ENCODE measurements at regions of chr1 and their contacts with region 1.

Region 1: DNA sequence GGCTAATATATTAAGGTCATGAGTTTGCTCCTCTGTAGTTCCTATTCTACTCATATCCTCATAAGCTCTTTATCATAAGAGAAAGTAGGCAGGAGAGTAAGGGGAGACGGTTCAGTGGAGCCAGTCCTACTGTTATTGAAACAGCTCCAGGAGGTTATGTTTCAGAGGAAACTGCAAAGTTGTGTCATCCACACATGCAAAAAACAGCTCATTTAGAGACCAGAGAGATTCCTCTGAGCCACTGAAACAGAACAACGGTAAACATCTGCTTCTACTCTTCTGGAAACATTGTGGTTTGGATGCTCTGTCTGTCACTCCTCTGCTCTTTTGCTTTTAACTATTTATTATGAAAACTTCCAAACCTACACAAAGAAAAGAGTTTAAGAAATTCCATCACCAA is 66.3 kb upstream of the PPP2R5A start:
- DNase-seq: peak; percentile 70
- H3K4me3 Mint-ChIP-seq: peak overlapping the region; percentile 34
- H3K27ac Mint-ChIP-seq: peak overlapping the region; percentile 81
- H3K4me1 Mint-ChIP-seq: peaks cover 27% of the 10 kb centered on the region
- H3K27me3 Mint-ChIP-seq: no peaks in the 10 kb centered on the region

Region 2: GRCh38 chr1:212179394-212180076 is 39.4 kb before region 1 on chr1:
- intact Hi-C with region 1: loop called (anchors 5 kb)
- DNase-seq: no peak
- H3K4me3 Mint-ChIP-seq: no peak overlapping the region
- H3K27ac Mint-ChIP-seq: no peak overlapping the region
- H3K4me1 Mint-ChIP-seq: peaks cover 6% of the 10 kb centered on the region
- H3K27me3 Mint-ChIP-seq: no peaks in the 10 kb centered on the region

Region 3: GRCh38 chr1:212234431-212235395 is 15.8 kb after region 1 on chr1:
- intact Hi-C with region 1: loop called (anchors 1 kb)
- DNase-seq: peak; percentile 74
- H3K4me3 Mint-ChIP-seq: peak overlapping the region; percentile 46
- H3K27ac Mint-ChIP-seq: peak overlapping the region; percentile 80
- H3K4me1 Mint-ChIP-seq: peaks cover 51% of the 10 kb centered on the region
- H3K27me3 Mint-ChIP-seq: no peaks in the 10 kb centered on the region

Region 4: DNA sequence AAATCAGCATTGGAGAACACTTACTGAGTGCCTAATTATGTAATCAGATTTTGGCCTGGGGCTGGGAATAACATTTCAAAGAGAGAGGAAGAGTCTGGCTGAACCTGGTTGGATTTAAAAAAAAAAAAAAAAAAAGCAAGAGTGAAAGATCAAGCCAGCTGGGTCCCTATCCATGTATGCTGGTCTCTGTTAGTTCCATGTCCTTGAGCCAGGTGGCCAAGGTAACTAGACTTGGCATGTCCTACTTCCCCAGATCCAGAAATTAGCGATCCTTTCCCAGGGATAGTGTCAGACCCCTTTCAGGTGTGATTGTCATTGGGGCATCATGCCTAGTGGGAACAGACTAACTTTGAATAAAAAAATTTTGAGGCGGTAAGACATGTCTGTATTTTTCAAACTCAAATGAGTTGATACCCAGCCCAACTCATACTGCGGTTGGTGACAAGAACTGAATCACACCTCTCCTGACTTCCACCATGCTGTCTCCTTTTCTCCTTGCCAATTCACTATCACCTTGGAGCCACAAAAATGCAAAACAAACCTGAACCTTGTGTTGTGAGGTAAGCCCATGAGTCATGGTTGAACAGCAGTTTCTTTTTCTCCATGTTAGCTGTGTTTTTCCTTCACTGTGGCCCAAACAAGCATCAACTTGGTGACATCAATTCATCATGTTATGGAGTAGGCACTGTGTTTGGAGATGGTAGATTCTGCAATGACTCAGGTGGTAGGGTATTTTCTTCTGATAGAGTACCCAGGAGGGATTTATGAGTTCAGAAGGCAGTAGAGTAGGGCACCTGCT is 41.8 kb after region 1 on chr1:
- intact Hi-C with region 1: loop called (anchors 2 kb)
- DNase-seq: peak; percentile 75
- H3K4me3 Mint-ChIP-seq: no peak overlapping the region
- H3K27ac Mint-ChIP-seq: peak overlapping the region; percentile 73
- H3K4me1 Mint-ChIP-seq: peaks cover 34% of the 10 kb centered on the region
- H3K27me3 Mint-ChIP-seq: no peaks in the 10 kb centered on the region

Measured in activated CD4-positive, alpha-beta T cell treated with anti-CD3 and anti-CD28 coated beads, Interleukin-2, amount 10 ng/mL, durations not matched to agents 24 days and 14 days (primary cell).